ENCODE measurements at regions of chr1 and their contacts with region 1.

Region 1: DNA sequence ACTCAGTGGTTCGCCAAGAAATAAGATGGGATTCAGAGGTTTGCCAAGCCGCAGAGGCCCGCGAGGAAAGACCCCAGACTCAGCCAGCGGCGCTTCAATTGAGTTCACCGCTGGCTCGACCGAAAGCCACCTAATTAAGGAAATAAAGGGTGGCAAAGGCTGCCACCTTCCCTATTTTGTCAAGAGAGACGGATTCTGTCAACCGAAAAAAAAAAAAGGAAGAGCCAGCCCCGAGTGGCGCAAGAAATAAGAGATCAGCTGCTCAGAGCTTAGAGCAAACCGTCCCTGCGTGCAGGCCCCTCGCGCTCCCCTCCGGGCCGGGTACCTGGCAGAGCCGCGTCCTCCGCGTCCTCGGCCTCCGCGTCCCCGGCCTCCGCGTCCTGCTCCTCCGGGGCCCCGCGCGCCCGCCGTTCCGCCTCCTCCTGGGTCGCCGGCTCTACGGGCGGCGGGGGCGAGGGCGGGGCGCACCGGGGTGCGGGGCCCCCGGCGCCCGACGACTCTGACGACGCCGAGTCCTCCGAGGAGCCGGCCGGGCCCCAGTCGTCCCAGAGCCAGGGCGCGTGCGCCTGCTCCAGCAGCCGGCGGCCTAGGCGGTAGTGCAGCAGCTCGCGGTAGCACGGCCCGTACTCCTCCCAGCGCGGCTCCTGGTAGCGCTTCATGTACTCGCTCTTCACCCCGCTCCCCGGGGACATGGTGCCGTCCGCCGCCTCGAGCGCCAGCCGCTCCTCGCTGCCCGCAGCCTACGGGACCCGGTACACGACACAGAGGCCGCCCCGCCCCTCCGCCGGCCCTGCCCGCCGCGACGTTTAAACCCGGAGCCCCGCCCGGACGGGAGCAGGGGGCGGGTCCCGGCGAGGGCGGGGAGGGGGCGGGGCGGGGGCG is 832 bp downstream of the CCSAP start:
- DNase-seq: peak; percentile 51
- ATAC-seq: peak; percentile 82
- H3K4me3 ChIP-seq: peak overlapping the region; percentile 77 to 95 (median 83)
- H3K27ac ChIP-seq: peak overlapping the region; percentile 75
- H3K4me1 ChIP-seq: peaks cover 62% of the 10 kb centered on the region
- H3K27me3 ChIP-seq: peaks cover 0 to 6% of the 10 kb centered on the region in 2 experiments; a peak in 1 of 5 replicates
- CTCF ChIP-seq: no peak
- EP300 ChIP-seq: no peak
- POLR2A ChIP-seq: peak; percentile 48 to 79; a peak in 3 of 4 replicates
- RAD21 ChIP-seq: no peak; the same call in 1 of the 2 replicates

Region 2: DNA sequence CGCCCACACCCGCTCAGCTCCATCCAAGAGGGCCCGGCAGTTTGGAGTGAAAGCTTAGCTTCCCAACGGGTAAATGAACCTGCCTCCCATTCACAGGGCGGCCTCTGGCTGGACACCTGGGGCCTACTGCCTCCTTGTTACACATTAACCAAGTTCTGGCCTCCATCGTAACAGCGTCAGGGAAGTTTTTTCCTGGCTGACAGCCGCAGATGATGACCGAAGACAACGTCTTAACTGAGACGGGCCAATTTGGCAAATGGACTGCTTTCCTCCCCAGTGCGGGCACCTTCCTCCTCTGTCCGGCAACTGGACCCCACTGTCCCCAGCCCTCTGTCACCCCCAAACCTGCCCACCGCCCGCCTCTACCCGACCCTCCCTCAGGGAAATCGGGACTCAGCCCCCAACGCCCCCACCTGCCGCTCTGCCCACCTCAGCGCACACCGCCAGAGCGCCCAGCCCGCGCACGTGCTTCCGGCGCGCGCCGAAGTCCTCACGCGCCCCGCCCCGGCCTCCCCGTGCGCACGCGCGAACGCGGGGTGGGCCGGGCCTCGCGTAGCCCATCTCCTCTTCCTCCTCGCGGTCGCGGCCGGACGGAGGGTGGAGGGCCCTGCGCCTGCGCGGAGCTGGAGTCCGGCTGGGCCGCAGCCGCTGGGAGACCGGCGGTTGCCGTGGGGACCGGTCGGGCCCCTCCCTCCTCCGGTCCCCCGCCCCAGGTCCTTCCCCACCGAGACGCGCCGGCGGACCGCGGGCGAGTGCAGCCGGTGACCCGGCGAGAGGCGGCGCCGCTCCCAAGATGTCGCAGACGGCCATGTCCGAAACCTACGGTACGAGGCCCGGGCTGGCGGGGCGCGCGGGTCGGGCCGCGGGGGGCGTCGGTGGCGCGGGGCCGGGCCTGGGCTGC is 71.2 kb before region 1 on chr1 and contains the start of gene RAB4A:
- CTCF ChIA-PET with region 1: no interaction called
- POLR2A ChIA-PET with region 1: interaction called, 9 read pairs
- in situ Hi-C with region 1: no loop called
- intact Hi-C with region 1: loop called (anchors 2 kb)
- DNase-seq: peak; percentile 85
- ATAC-seq: peak; percentile 81
- H3K4me3 ChIP-seq: peak within 1 kb of the TSS; percentile 76 to 86 (median 81)
- H3K27ac ChIP-seq: peak within 1 kb of the TSS; percentile 100
- H3K4me1 ChIP-seq: peaks cover 46% of the 10 kb centered on the region
- H3K27me3 ChIP-seq: peaks cover 0 to 3% of the 10 kb centered on the region in 2 experiments; a peak in 1 of 5 replicates
- CTCF ChIP-seq: no peak
- EP300 ChIP-seq: peak in 1 of 2 experiments; percentile 51; a peak in 1 of 4 replicates
- POLR2A ChIP-seq: peak; percentile 67 to 74
- RAD21 ChIP-seq: 0 out of 2 replicates have a peak, but pooled peaks have one; percentile 24
- total RNA-seq, gene RAB4A: 76.6 and 80.1 TPM in 2 replicates

Region 3: DNA sequence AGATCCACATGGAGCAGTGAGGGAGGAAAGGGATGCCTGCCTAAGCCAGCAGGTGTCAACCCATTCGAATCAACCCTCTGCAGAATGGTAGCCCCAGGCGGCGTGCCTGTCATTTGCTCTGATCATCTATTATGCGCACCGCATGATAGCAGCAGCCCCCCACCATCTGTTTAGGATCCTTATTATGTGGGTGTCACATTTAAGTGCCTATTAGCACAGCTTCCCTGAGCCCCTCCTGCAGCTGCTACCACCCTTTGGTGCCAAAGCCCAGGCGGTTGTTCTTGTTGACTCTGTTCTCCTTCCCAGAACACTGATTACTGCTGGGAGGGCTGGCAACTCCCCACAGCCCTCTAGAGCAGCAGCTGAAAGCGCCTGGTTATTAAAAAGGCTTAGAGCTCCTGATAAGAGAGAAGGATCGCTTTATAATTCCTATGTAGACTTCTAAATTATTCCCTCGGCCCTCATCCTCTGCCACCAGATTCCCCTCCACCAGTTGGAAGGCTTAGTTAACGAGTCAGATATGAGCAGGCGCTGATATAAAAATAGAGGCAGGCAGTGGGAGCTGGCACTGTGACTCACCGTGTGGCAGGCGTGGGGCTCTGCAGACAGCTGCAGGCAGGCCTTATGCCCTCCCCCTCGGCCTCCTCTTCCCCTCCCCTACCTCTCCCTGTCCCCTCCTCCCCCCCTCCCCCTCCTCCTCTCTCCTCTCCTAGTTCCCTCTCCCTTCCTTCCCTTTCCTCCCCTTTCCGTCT is 68.9 kb after region 1 on chr1:
- CTCF ChIA-PET with region 1: no interaction called
- POLR2A ChIA-PET with region 1: interaction called, 6 read pairs
- in situ Hi-C with region 1: no loop called
- intact Hi-C with region 1: loop called (anchors 5 kb)
- DNase-seq: no peak
- ATAC-seq: no peak
- H3K4me3 ChIP-seq: no peak overlapping the region
- H3K27ac ChIP-seq: no peak overlapping the region
- H3K4me1 ChIP-seq: peaks cover 62% of the 10 kb centered on the region
- H3K27me3 ChIP-seq: peaks cover 2 to 8% of the 10 kb centered on the region in 2 experiments; a peak in 3 of 5 replicates
- CTCF ChIP-seq: no peak
- EP300 ChIP-seq: no peak
- POLR2A ChIP-seq: no peak
- RAD21 ChIP-seq: no peak

Region 4: GRCh38 chr1:229452956-229453801 is 111.2 kb after region 1 on chr1:
- CTCF ChIA-PET with region 1: no interaction called
- POLR2A ChIA-PET with region 1: no interaction called
- in situ Hi-C with region 1: no loop called
- intact Hi-C with region 1: no loop called
- DNase-seq: peak; percentile 13
- ATAC-seq: no peak
- H3K4me3 ChIP-seq: no peak overlapping the region
- H3K27ac ChIP-seq: no peak overlapping the region
- H3K4me1 ChIP-seq: no peaks in the 10 kb centered on the region
- H3K27me3 ChIP-seq: no peaks in the 10 kb centered on the region
- CTCF ChIP-seq: peak; percentile 53
- EP300 ChIP-seq: no peak
- POLR2A ChIP-seq: no peak
- RAD21 ChIP-seq: no peak

Region 5: DNA sequence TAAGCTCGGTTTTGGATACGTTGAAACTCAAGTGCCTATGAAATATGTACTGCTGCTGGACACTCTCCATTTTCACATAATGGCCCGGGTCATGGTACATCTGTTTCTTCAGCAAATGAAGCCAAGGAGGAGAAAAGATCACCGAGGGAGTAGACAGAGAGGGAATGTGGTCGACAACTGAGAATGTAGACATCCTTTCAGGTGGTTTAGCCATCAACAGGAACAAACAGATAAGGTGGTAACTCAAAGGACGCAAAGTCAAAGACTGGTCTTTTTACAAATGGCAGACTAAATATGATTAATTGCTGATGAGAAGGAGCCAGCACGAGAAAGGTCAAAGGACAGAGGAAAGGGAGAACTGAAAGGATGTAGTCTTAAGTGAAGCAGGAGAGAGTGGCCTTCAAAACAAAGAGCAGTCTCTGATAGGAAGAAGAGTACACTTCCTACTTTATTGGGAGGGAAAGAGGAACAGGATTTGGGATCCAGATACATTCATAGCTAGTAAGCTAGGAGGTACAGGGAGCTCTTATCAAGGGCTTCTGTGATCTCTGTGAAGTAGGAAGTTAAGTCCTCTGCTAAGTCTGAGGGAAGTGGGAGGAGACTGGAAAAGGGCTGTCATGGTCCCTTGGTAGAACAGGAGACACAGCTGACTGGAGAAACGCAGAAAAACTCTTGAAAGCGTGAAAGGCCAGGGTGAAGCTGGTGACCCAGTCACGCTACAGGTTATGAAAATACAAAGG is 137.8 kb after region 1 on chr1:
- CTCF ChIA-PET with region 1: no interaction called
- POLR2A ChIA-PET with region 1: no interaction called
- in situ Hi-C with region 1: no loop called
- intact Hi-C with region 1: loop called (anchors 10 kb)
- DNase-seq: no peak
- ATAC-seq: no peak
- H3K4me3 ChIP-seq: no peak overlapping the region
- H3K27ac ChIP-seq: no peak overlapping the region
- H3K4me1 ChIP-seq: peaks cover 7% of the 10 kb centered on the region
- H3K27me3 ChIP-seq: no peaks in the 10 kb centered on the region
- CTCF ChIP-seq: no peak
- EP300 ChIP-seq: no peak
- POLR2A ChIP-seq: no peak
- RAD21 ChIP-seq: no peak

Measured in HepG2 (cell line).